ENCODE measurements at regions of chr10 and their contacts with region 1.

Region 1: GRCh38 chr10:124688889-124689670 is 55.1 kb downstream of the FAM53B start:
- DNase-seq: no peak
- H3K4me3 ChIP-seq: no peak overlapping the region
- H3K27ac ChIP-seq: peak overlapping the region; percentile 13 to 100 (median 98)
- H3K27me3 ChIP-seq: no peaks in the 10 kb centered on the region
- CTCF ChIP-seq: no peak

Region 2: DNA sequence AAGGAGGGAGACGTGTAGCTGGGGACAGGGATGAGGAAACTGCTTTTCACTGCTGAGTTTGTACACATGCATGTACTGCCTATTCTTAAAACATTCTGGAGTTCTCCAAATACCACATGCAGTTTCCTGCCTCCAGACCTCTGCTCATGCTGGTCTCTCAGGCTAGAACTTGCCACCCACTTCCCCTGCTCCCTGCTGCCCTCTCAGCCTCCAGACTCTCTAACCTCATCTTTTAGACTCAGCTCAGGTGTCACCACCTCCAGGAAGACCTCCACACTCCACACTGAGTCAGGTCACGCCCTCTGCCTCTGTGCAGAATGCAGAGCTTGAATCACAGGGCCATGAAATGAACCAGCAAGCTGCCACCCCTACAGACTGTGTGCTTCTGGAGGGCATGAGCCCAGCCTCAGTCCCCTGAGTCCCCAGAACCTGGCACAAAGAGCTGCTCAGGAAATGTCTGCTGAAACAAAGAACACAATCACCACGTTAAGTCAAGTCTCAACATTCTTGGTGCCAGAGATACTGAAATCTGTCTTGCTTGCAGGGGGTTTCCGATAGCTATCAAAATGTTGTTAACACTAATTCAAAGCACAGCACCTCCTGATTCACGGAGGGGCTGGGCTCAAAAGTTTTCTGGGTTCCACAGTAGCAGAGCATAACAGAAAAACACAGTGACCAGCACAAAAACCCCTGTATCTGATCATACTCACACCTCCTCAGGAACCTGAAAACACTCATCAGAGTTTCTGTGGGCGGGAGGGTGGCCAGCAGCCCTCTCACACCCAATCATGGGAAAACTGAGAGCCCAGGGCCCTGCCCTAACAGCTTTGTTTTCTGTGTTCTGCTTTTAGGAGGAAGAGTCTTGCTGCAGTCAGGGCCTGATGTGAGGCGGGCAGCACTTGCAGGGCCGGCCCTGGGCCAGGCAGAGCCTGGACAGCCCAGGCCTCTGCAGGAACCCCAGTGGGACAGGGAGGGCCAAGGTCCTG is 34.0 kb after region 1 on chr10:
- intact Hi-C with region 1: loop called (anchors 1 to 5 kb)
- DNase-seq: peak in 4 of 10 donors; percentile 38 to 58 (median 52)
- H3K4me3 ChIP-seq: peak overlapping the region in 2 of 59 donors; percentile 5 to 17
- H3K27ac ChIP-seq: peak overlapping the region; percentile 82 to 100 (median 98)
- H3K27me3 ChIP-seq: no peaks in the 10 kb centered on the region
- CTCF ChIP-seq: peak in 2 of 56 donors; percentile 9 to 12